ENCODE measurements at regions of chr11 and their contacts with region 1.

Region 1: GRCh38 chr11:96242971-96243647 is 99.9 kb downstream of the MAML2 start:
- DNase-seq: peak; percentile 97 to 98
- ATAC-seq: peak; percentile 97
- H3K4me3 ChIP-seq: peak overlapping the region in 1 of 2 donors; percentile 39
- H3K27ac ChIP-seq: peak overlapping the region in 1 of 2 donors; percentile 85
- H3K4me1 ChIP-seq: peaks cover 4 to 9% of the 10 kb centered on the region in 2 donors
- H3K27me3 ChIP-seq: no peaks in the 10 kb centered on the region

Region 2: DNA sequence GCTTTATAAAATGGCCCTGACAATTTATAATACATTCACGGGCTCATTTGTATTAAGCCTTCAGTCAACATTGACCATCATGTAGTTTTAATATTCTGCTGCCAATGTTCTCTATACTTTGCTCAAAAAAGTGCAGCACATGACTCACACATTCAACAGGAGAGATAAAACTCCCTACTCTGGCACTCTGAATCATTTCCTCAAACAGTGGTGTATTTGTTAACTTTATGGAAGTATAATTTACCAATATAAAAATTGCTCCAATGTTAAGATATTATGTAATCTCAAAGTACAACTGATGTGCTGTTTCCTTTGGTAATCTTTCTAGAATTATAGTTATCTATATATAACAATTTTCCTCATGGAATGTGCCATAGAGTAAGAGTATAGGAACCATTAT is 60.0 kb after region 1 on chr11:
- intact Hi-C with region 1: no loop called
- DNase-seq: no peak
- ATAC-seq: no peak
- H3K4me3 ChIP-seq: no peak overlapping the region
- H3K27ac ChIP-seq: no peak overlapping the region
- H3K4me1 ChIP-seq: peaks cover 11 to 14% of the 10 kb centered on the region in 2 donors
- H3K27me3 ChIP-seq: no peaks in the 10 kb centered on the region

Region 3: DNA sequence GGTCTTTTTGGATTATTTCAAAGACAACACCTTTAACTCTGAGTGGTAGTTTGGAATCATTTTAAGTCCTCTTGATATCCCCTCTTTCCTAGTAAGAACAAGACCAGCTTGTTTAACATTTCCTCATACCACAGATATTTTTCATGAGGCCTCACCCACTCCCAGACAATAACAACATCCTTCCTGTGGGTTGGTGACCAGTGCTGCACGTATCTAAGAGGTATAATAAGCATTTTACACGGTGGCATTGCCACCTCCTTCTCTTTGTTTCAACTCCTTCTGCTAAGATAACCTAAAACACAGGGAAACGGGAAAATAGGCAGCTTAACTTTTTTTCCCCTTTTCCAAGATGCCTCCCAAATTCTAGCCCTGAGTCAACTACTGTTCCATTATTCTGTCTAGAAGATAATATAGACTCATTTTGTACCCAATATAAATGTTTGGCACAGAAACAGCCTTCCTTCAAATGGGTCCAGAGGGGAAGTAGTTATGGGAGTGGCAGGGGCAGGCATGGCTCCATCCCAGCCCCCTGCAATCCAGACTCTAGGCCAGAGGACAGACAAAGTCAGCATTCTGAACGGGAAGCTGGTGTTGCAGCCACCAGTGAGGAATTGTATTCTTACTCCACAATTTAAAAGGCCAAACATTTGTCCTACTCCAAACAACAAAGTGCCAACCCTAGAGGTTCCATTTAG is 71.4 kb after region 1 on chr11:
- intact Hi-C with region 1: loop called in 1 of 2 experiments (anchors 10 kb)
- DNase-seq: no peak
- ATAC-seq: no peak
- H3K4me3 ChIP-seq: no peak overlapping the region
- H3K27ac ChIP-seq: peak overlapping the region in 1 of 2 donors; percentile 68
- H3K4me1 ChIP-seq: peaks cover 4 to 26% of the 10 kb centered on the region in 2 donors
- H3K27me3 ChIP-seq: no peaks in the 10 kb centered on the region

Measured in aorta (tissue), 5 donors.